Lower lobe of right lung (tissue), 2 donors: ENCODE measurements at regions of chr6 and their contacts with region 1.

Region 1: DNA sequence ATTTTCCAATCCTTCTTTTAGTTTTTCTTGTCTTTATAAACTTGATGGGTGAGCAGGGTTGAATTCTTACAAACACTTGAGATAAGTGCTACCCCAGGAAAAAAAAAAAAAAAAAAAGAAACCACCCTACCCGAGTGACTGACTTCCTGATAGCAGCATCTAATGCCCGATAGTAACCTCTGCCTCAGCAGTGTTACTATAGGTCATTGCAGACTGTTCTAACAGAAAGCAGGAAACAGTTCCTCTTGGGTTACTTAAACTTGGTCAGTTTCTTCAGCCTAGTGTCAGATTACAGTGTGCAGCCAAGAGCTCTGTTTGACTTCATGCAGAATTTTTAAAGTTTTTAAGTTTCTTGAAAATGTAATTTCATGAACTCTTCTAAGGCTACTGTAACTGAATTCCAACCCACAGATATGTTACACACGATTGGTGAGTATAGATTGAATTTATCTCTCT is 2.1 kb downstream of the MYLIP start:
- DNase-seq: no peak
- ATAC-seq: peak; percentile 62 to 74
- H3K4me3 ChIP-seq: peak overlapping the region; percentile 89
- H3K27ac ChIP-seq: peak overlapping the region; percentile 95
- H3K4me1 ChIP-seq: peaks cover 44% of the 10 kb centered on the region
- H3K27me3 ChIP-seq: no peaks in the 10 kb centered on the region
- CTCF ChIP-seq: no peak

Region 2: DNA sequence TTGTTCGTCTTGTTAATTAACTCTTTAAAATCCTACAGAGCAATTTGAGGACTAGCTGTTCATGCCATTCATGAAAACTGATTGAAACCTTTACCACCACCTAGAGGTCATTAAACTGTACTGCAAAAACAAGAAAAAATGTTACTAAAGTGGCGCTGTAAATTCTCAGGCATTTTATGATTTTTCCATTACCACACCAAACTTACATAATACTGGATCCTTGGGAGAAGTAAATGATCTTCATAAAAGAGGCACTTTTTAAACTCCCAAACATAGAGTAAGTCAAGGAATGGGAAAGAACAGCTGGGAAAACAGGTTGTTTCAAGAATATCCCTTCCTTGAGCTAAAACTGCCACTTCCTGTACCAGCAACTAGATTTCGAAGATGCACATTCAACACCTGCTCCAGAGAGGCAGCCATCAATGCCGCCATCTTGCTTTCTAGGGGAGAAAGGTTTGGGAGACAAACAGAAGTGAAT is 52.3 kb after region 1 on chr6:
- intact Hi-C with region 1: loop called (anchors 10 kb)
- DNase-seq: no peak
- ATAC-seq: peak; percentile 52 to 63
- H3K4me3 ChIP-seq: no peak overlapping the region
- H3K27ac ChIP-seq: no peak overlapping the region
- H3K4me1 ChIP-seq: peaks cover 10% of the 10 kb centered on the region
- H3K27me3 ChIP-seq: no peaks in the 10 kb centered on the region
- CTCF ChIP-seq: peak; percentile 77

Region 3: GRCh38 chr6:16228709-16229665 is 98.0 kb after region 1 on chr6:
- intact Hi-C with region 1: no loop called
- DNase-seq: no peak
- ATAC-seq: peak in 1 of 2 donors; percentile 18
- H3K4me3 ChIP-seq: peak overlapping the region; percentile 20
- H3K27ac ChIP-seq: no peak overlapping the region
- H3K4me1 ChIP-seq: peaks cover 7% of the 10 kb centered on the region
- H3K27me3 ChIP-seq: no peaks in the 10 kb centered on the region
- CTCF ChIP-seq: no peak

Region 4: DNA sequence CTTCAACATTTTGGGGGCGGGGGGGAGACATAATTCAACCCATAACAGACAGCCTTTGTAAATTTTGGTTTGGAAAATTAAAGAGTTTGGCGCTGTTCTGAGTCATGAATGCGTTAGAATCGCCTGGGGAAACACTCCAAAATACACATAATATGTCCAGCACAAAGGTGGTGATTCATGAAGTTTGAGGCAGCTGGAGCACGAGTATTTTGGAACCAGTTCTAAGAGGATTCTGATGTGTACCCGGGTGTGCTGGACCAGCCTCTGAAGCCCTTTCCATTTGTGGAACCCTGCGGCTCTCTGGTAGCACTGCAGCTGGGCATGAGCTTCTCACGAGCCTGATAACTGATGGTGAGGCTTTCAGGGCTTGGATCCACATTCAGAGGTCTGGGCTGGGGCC is 112.1 kb after region 1 on chr6:
- intact Hi-C with region 1: no loop called
- DNase-seq: no peak
- ATAC-seq: no peak
- H3K4me3 ChIP-seq: no peak overlapping the region
- H3K27ac ChIP-seq: no peak overlapping the region
- H3K4me1 ChIP-seq: peaks cover 20% of the 10 kb centered on the region
- H3K27me3 ChIP-seq: no peaks in the 10 kb centered on the region
- CTCF ChIP-seq: no peak

Region 5: GRCh38 chr6:16585805-16586204 is 454.8 kb after region 1 on chr6:
- intact Hi-C with region 1: no loop called
- DNase-seq: no peak
- ATAC-seq: peak; percentile 59 to 67
- H3K4me3 ChIP-seq: peak overlapping the region; percentile 29
- H3K27ac ChIP-seq: no peak overlapping the region
- H3K4me1 ChIP-seq: peaks cover 10% of the 10 kb centered on the region
- H3K27me3 ChIP-seq: no peaks in the 10 kb centered on the region
- CTCF ChIP-seq: no peak